Heart right ventricle (tissue), 16 donors: ENCODE measurements at regions of chr20 and their contacts with region 1.

Region 1: GRCh38 chr20:50286609-50287008 is 96.0 kb downstream of the CEBPB start:
- DNase-seq: peak in 1 of 2 donors; percentile 56
- ATAC-seq: peak in 7 of 8 donors; percentile 37 to 79 (median 61)
- H3K4me3 ChIP-seq: peak overlapping the region in 5 of 10 donors; percentile 7 to 31 (median 14)
- H3K27ac ChIP-seq: peak overlapping the region; percentile 39 to 96 (median 84)
- H3K4me1 ChIP-seq: peaks cover 10 to 62% (median 37%) of the 10 kb centered on the region in 9 donors
- H3K27me3 ChIP-seq: no peaks in the 10 kb centered on the region
- CTCF ChIP-seq: no peak

Region 2: DNA sequence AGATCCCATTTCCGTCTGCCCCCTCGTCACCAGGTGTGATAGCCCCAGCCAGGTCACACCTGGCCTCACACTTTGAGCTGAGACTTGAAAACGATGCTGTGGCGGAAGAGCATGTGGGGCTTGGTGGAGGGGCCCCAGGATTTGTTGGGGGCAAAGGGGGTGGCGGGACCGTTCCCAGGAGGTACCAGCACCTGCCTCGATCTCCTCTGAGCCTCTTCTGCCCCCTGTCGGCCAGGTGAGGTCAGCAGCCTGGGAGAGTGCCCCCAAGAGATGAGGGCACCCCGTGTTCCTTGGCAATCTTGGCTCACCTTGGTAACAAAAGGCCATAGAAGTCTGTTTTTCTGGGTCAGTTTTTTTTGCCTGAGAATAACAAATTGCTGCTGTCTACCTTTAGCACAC is 396.7 kb before region 1 on chr20:
- intact Hi-C with region 1: no loop called
- DNase-seq: no peak
- ATAC-seq: no peak
- H3K4me3 ChIP-seq: no peak overlapping the region
- H3K27ac ChIP-seq: peak overlapping the region in 4 of 10 donors; percentile 0 to 79 (median 59)
- H3K4me1 ChIP-seq: peaks cover 27 to 81% (median 70%) of the 10 kb centered on the region in 9 donors
- H3K27me3 ChIP-seq: no peaks in the 10 kb centered on the region
- CTCF ChIP-seq: peak in 5 of 9 donors; percentile 6 to 29 (median 12)

Region 3: DNA sequence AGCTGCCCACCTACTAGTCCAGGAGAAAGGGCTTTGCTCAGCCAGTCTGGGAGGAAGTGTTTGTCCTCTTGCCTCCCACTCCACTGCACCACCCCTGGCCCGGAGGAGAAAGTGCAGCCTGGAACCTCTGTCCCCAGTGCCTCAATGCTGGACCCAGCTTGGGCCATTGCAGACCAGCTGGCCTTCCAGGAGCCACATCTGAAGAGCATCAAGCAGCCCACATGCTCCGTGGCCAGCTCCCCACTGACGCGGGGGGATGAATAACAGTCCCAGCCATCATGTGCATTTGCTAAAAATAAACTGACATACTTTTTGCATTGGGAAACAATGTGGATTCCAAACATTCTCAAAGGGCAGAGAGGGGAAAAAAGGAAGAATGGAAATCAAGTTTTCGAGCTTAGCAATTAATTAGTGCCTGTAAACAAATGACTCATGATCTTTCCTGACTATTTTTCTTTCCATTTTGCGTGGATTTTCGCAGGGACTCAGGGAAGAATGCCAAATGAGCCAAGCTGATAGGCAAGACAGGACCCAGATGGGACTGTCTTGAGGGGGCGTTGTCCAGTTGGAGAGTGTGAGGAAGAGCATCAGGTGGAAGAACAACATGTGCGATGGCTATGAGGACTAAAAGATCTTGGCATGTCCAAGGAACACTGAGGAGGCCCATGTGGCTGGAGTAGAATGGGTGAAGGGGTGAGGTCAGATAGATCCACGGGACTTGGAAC is 61.9 kb before region 1 on chr20:
- intact Hi-C with region 1: loop called in 1 of 10 experiments (anchors 10 kb)
- DNase-seq: peak; percentile 50 to 68
- ATAC-seq: peak; percentile 60 to 90 (median 88)
- H3K4me3 ChIP-seq: no peak overlapping the region
- H3K27ac ChIP-seq: peak overlapping the region; percentile 22 to 83 (median 68)
- H3K4me1 ChIP-seq: peaks cover 0 to 79% (median 13%) of the 10 kb centered on the region in 9 donors
- H3K27me3 ChIP-seq: no peaks in the 10 kb centered on the region
- CTCF ChIP-seq: peak in 6 of 9 donors; percentile 8 to 32 (median 27)

Region 4: GRCh38 chr20:50302341-50303041 is 15.9 kb after region 1 on chr20:
- intact Hi-C with region 1: loop called in 1 of 10 experiments (anchors 1 kb)
- DNase-seq: no peak
- ATAC-seq: no peak
- H3K4me3 ChIP-seq: no peak overlapping the region
- H3K27ac ChIP-seq: peak overlapping the region in 6 of 10 donors; percentile 3 to 96 (median 52)
- H3K4me1 ChIP-seq: peaks cover 20 to 73% (median 40%) of the 10 kb centered on the region in 9 donors
- H3K27me3 ChIP-seq: no peaks in the 10 kb centered on the region
- CTCF ChIP-seq: no peak

Region 5: DNA sequence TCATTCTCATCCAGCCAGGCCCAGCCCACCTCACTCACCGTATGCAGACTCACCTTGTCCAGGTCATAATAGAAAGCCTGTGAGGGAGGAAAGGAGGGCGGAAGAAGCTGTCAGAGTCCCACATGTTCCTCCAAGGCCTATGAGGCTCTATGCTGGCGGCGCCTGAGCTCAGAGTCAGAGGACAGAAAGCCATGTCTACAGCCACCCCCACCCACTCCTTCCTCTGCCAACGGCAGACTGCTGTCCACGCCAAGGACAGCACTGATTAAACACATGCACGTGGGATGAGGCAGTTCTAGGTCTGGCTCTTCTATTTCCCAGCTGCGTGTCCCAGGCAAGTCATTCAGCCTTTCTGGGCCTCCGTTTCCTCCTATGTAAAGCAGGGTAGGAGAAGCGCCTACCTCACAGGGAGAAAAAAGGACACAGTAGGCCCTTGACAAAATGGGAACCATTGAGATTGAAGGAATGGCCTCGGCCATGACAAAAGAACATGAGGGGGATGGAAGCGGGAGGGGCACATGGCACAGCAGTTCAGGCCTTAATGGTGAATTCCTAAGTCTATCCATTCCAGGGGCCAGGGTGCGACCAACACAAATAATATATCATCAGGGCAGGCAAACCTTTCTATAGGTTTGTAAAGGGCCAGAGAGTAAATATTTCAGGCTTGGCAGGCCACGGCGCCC is 324.7 kb after region 1 on chr20:
- intact Hi-C with region 1: no loop called
- DNase-seq: no peak
- ATAC-seq: peak in 4 of 8 donors; percentile 32 to 77 (median 66)
- H3K4me3 ChIP-seq: no peak overlapping the region
- H3K27ac ChIP-seq: no peak overlapping the region
- H3K4me1 ChIP-seq: peaks cover 0 to 9% (median 0%) of the 10 kb centered on the region in 9 donors
- H3K27me3 ChIP-seq: no peaks in the 10 kb centered on the region
- CTCF ChIP-seq: no peak